Transverse colon (tissue), 4 donors: ENCODE measurements at regions of chr1 and their contacts with region 1.

Region 1: DNA sequence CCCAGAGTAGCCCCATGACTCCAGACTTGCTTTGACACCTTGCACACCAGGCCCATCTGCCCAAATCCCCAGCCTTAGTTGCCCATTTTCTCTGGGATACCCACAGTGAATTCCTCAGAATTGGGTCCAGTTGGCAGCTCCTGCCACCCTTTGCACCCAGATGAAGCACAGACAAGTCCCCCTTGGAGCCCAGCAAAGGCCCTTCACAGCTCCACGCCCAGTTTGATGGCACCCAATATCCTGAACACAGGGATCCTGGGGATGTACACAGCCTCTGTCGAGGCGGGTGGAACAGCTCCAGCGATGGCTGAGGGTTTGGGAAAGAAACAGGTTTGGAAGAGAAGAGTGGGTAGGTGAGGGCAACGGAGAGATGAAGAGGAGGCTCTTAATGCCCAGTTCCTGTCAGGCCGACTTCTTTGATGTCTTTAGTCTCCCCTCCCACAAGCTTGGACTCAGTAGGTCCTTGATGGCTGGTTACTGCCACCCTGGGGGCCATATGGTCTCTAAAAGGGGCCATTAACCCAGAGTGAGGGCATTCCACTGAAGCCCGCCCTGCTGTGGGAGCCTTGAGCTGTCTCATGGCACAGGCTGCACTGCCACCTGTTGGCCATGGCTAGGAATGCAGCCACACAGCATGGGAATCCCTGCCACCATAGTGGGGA is 21.7 kb downstream of the TMEM53 start:
- DNase-seq: peak; percentile 83
- H3K4me3 ChIP-seq: no peak overlapping the region
- H3K27ac ChIP-seq: peak overlapping the region in 1 of 4 donors; percentile 34
- H3K4me1 ChIP-seq: no peaks in the 10 kb centered on the region
- H3K27me3 ChIP-seq: no peaks in the 10 kb centered on the region
- CTCF ChIP-seq: peak; percentile 90 to 95 (median 93)
- EP300 ChIP-seq: no peak
- POLR2A ChIP-seq: no peak

Region 2: GRCh38 chr1:44371206-44371605 is 281.4 kb before region 1 on chr1:
- in situ Hi-C with region 1: loop called in 1 of 4 experiments (anchors 5 kb)
- intact Hi-C with region 1: no loop called
- DNase-seq: no peak
- H3K4me3 ChIP-seq: no peak overlapping the region
- H3K27ac ChIP-seq: no peak overlapping the region
- H3K4me1 ChIP-seq: no peaks in the 10 kb centered on the region
- H3K27me3 ChIP-seq: no peaks in the 10 kb centered on the region
- CTCF ChIP-seq: no peak
- EP300 ChIP-seq: no peak
- POLR2A ChIP-seq: no peak

Region 3: DNA sequence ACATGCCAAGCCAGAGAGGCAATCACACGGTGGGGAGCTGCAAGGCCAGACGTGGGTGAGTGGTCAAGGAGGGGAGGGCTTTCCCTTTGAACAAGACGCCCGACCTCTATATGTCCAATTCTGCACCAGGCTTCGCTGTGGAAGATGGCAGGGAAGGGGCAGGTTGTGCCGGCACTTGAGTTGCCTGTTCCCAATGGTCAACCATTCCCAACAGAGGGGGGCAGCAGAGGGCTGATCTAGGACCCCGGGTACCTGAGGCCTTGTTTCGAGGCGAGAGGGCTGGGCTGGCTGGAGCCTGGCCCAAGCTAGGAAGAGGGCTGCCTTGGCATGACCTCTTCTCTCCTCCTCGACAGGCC is 43.2 kb before region 1 on chr1:
- in situ Hi-C with region 1: loop called in 1 of 4 experiments (anchors 5 kb)
- intact Hi-C with region 1: loop called (anchors 2 kb)
- DNase-seq: peak; percentile 44
- H3K4me3 ChIP-seq: no peak overlapping the region
- H3K27ac ChIP-seq: no peak overlapping the region
- H3K4me1 ChIP-seq: peaks cover 0 to 3% (median under 1%) of the 10 kb centered on the region in 4 donors
- H3K27me3 ChIP-seq: no peaks in the 10 kb centered on the region
- CTCF ChIP-seq: peak; percentile 24 to 43 (median 36)
- EP300 ChIP-seq: no peak
- POLR2A ChIP-seq: no peak